ENCODE measurements at regions of chr1 and their contacts with region 1.

Region 1: DNA sequence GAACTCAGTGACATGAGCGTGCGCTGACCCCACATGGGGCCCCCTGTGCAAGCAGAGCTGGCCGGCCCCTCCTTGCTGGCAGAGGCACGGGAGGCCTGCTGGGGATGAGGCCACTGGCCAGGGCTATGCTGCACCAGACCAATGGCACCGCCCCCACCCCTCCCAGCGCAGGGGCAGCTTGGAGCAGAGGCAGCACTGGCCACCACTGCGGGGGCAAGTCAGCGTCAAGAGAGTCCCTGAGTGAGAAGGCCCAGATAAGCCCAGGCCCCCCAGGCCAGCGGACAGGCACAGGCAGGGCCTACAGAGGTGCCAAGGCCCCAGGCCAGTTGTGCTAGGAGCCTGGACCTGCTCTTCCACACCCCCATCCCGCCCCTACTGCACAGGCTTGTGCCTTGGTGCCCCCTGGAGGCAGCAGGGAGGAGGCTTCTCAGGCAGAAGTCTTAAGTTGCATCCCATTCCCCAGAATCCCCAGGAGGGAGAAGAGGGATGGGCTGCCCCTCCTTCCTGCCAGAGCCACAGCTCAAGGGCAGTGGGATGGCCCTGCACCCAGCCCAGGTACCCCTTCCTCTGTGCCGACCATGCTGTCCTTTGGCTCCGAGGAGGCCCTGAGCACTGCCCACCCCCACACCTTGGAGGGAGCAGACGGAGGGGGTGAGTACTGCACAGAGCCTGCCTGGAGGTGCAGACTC is 35.8 kb downstream of the EPHX1 start:
- DNase-seq: peak; percentile 82 to 88
- H3K4me3 ChIP-seq: no peak overlapping the region
- H3K27ac ChIP-seq: no peak overlapping the region
- H3K4me1 ChIP-seq: peaks cover 0 to 8% (median 4%) of the 10 kb centered on the region in 4 experiments; a peak in 4 of 7 replicates
- H3K27me3 ChIP-seq: no peaks in the 10 kb centered on the region; a peak in 1 of 7 replicates
- CTCF ChIP-seq: peak; percentile 91 to 96 (median 94)
- EP300 ChIP-seq: no peak
- POLR2A ChIP-seq: no peak; a peak in 1 of 3 replicates
- RAD21 ChIP-seq: peak; percentile 93 to 96

Region 2: GRCh38 chr1:225474986-225475820 is 370.5 kb before region 1 on chr1:
- CTCF ChIA-PET with region 1: interaction called, 21 read pairs
- POLR2A ChIA-PET with region 1: interaction called, 3 read pairs
- DNase-seq: peak in 1 of 2 experiments; percentile 96
- H3K4me3 ChIP-seq: no peak overlapping the region
- H3K27ac ChIP-seq: no peak overlapping the region
- H3K4me1 ChIP-seq: peaks cover 0 to 6% (median 1%) of the 10 kb centered on the region in 4 experiments; a peak in 4 of 7 replicates
- H3K27me3 ChIP-seq: no peaks in the 10 kb centered on the region
- CTCF ChIP-seq: peak; percentile 100
- EP300 ChIP-seq: no peak
- POLR2A ChIP-seq: no peak
- RAD21 ChIP-seq: peak; percentile 100

Region 3: DNA sequence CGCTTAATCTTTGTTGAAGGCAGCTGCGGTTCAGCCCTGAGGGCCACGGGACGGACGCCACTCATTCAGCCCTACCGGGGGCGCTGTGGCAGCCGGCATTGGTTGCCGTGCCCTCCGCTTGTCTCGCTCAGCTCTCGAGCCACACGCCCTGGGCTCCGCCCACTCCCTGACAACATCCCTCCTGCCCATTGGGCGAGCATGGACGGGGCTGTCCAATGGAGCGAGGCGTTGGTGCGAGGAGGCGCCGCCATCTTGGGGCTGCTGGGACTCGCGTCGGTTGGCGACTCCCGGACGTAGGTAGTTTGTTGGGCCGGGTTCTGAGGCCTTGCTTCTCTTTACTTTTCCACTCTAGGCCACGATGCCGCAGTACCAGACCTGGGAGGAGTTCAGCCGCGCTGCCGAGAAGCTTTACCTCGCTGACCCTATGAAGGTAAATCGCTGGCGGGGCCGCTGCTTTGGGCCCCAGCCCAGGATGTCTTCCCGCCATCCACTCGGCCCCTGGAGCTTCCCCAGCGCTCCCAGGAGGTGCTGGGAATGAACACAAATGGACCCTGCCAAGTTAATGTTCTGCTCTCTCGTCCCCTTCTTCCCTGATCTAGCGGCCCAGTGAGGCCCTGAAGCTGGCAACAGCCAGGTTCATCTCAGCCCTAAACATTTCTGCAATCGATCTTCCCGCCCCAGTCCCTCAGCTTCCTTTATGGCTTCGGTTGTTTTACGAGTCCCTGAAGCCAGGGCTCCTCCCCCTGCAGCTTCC is 68.0 kb before region 1 on chr1 and contains the start of gene SRP9:
- CTCF ChIA-PET with region 1: interaction called, 18 read pairs
- POLR2A ChIA-PET with region 1: interaction called, 10 read pairs
- DNase-seq: peak; percentile 98 to 99
- H3K4me3 ChIP-seq: peak within 1 kb of the TSS; percentile 92 to 99 (median 96)
- H3K27ac ChIP-seq: peak within 1 kb of the TSS; percentile 99
- H3K4me1 ChIP-seq: peaks cover 1 to 5% (median 4%) of the 10 kb centered on the region in 4 experiments; a peak in 6 of 7 replicates
- H3K27me3 ChIP-seq: no peaks in the 10 kb centered on the region
- CTCF ChIP-seq: peak; percentile 78 to 96 (median 92)
- EP300 ChIP-seq: no peak
- POLR2A ChIP-seq: peak; percentile 89 to 95
- RAD21 ChIP-seq: peak; percentile 69 to 72
- total RNA-seq, gene SRP9: 446 and 448 TPM in 2 replicates

Region 4: DNA sequence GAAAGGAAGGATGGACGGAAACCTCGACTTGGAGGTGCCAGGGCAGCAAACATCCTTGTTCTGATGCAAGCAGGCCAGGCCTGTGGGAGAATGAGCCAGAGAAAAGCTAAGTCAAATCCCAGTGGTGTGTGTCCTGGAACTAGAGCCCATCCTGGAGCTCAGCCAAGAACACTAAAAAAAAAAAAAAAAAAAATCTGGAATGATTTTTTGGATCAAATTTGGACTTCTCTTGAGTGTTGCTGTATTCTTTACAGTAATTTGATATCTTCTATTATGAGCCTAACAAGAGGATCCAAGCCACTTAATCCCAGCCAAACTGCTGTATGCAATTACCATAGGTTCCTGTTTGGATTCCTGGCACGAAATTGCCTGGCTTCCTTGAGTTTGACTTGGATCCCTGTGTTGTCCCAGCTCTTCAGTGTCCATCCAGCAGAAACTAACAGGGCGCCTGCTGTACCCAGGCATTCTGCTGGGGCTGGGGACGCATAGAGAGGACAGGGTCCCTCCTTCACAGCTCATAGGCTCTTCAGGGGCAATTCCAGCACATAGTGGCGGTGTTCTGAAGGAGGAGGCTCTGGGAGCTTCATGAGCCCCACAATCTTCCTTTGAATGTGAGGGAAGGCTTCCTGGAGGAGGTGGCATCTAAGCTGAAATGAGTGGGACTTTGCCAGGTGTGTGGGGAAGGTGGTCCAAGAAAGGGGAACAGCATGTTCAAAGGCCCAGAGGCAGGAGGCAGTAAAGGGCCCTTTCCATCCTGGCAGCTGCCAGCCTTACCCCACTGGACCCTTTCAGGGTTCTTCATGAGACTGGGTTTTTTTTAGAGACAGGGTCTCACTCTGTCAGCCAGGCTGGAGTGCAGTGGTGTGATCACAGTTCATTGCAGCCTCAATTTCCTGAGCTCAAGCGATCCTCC is 11.0 kb before region 1 on chr1:
- CTCF ChIA-PET with region 1: interaction called, 11 read pairs
- POLR2A ChIA-PET with region 1: interaction called, 4 read pairs
- DNase-seq: no peak
- H3K4me3 ChIP-seq: no peak overlapping the region
- H3K27ac ChIP-seq: no peak overlapping the region
- H3K4me1 ChIP-seq: no peaks in the 10 kb centered on the region
- H3K27me3 ChIP-seq: no peaks in the 10 kb centered on the region
- CTCF ChIP-seq: no peak
- EP300 ChIP-seq: no peak
- POLR2A ChIP-seq: no peak
- RAD21 ChIP-seq: no peak

Region 5: GRCh38 chr1:225911191-225912130 is 65.7 kb after region 1 on chr1:
- CTCF ChIA-PET with region 1: interaction called, 10 read pairs
- POLR2A ChIA-PET with region 1: interaction called, 4 read pairs
- DNase-seq: peak in 1 of 2 experiments; percentile 94
- H3K4me3 ChIP-seq: no peak overlapping the region
- H3K27ac ChIP-seq: no peak overlapping the region
- H3K4me1 ChIP-seq: peaks cover 0 to 7% (median 1%) of the 10 kb centered on the region in 4 experiments; a peak in 2 of 7 replicates
- H3K27me3 ChIP-seq: no peaks in the 10 kb centered on the region; a peak in 2 of 7 replicates
- CTCF ChIP-seq: peak; percentile 75 to 97 (median 77)
- EP300 ChIP-seq: no peak
- POLR2A ChIP-seq: no peak
- RAD21 ChIP-seq: peak; percentile 86 to 92

Measured in H1 (cell line).